ENCODE measurements at regions of chr12 and their contacts with region 1.

Region 1: GRCh38 chr12:81627336-81628189 is 131.6 kb downstream of the PPFIA2 start:
- DNase-seq: no peak
- ATAC-seq: peak; percentile 58

Region 2: GRCh38 chr12:81330480-81330879 is 297.1 kb before region 1 on chr12:
- intact Hi-C with region 1: loop called (anchors 5 kb)
- DNase-seq: no peak
- ATAC-seq: no peak